ENCODE measurements at regions of chr1 and their contacts with region 1.

Region 1: DNA sequence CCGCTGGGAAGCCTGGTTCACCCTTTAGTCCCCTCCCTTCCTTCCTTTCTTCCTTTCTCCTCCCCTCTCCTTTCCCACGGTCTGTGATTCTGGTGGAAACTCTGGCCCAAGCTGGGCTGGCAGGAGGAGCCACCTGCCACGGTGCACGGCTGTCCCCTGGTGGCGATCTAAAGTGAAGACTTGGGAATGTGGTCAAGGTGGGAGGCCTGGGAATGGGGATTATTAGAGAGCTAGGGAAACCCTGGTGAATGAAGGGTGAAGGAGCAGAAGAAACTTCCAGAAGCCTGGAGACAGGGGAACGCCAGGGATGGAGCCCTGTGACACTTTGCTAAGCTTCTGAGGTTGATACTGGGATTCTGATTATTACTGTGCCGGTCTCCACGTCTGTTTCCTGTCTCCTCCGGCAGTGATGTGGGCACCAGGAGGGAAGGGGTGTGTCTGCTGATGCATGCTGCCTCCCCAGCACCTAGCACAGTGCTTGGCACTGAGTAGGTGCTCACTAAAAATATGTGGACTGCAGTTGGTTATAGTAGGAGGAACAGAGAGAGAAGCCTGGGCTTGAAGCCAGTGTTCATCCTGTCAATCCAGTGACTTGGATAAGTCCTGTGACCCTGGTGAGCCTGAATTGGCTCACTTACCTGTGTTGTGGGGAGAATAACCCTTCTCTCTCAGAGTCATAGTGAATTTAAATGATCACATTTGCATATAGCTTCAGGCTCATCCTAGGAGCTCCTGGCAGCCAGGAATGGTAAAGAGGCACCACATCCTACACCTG is 71.2 kb upstream of the NBPF3 start:
- DNase-seq: peak; percentile 71
- ATAC-seq: peak; percentile 97
- H3K4me3 ChIP-seq: peak overlapping the region in 1 of 2 experiments; percentile 23; a peak in 1 of 4 replicates
- H3K27ac ChIP-seq: no peak overlapping the region
- H3K4me1 ChIP-seq: no peaks in the 10 kb centered on the region
- H3K27me3 ChIP-seq: no peaks in the 10 kb centered on the region
- CTCF ChIP-seq: peak; percentile 100

Region 2: GRCh38 chr1:21232044-21232443 is 136.7 kb before region 1 on chr1:
- CTCF ChIA-PET with region 1: interaction called, 20 read pairs
- POLR2A ChIA-PET with region 1: no interaction called
- in situ Hi-C with region 1: no loop called
- intact Hi-C with region 1: loop called (anchors 1 kb)
- DNase-seq: no peak
- ATAC-seq: peak; percentile 83
- H3K4me3 ChIP-seq: no peak overlapping the region
- H3K27ac ChIP-seq: no peak overlapping the region
- H3K4me1 ChIP-seq: no peaks in the 10 kb centered on the region
- H3K27me3 ChIP-seq: no peaks in the 10 kb centered on the region
- CTCF ChIP-seq: peak; percentile 90

Region 3: GRCh38 chr1:21255278-21255942 is 113.3 kb before region 1 on chr1:
- CTCF ChIA-PET with region 1: interaction called, 33 read pairs
- POLR2A ChIA-PET with region 1: no interaction called
- in situ Hi-C with region 1: no loop called
- intact Hi-C with region 1: loop called (anchors 1 kb)
- DNase-seq: no peak
- ATAC-seq: peak; percentile 95
- H3K4me3 ChIP-seq: no peak overlapping the region
- H3K27ac ChIP-seq: no peak overlapping the region
- H3K4me1 ChIP-seq: peaks cover 19% of the 10 kb centered on the region
- H3K27me3 ChIP-seq: no peaks in the 10 kb centered on the region
- CTCF ChIP-seq: peak; percentile 92

Region 4: DNA sequence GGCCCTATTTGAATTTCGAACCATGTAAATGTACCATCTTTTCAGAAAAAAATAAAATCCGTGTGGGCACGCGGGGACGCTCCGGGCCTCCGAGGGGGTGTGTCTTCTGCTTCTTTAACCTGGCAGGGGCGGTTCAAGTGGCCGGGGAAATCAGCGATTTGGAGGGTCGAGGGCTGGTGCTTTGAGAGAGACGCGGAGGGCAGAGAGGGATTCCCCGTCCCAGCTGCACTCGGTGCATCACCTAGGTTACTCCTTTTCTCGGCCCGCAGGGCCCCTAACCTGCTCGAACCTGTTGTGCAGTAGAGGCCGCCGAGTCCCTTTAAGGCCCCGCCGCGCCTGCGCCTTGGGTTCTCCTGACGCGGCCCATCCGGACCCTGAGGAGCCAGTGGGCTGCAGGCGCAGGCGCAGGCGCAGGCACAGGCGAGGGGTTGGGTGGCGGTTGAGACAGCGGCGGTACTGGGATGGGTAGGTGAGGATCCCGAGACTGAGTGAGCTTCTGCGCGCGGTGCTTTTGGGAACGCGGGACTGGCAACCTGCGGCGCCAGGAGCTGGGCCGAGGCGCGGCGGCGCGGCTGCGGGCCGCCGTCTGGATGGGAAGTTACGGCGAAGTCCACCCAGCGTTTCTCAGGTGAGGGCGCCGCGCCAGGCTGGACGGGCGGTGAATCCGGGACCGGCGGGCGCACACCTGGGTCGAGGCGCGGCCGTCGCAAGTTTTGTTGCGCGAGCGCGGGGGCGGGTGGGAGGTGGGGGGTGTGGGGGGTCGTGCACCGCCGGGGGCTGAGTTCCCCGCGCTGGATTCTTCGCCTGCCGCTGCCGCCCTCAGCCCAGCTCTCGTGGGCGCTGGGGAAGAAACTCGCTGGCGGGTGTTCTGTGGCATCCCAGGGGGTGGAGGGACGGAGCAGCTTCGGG is 71.3 kb after region 1 on chr1 and contains the start of gene NBPF3:
- CTCF ChIA-PET with region 1: interaction called, 11 read pairs
- POLR2A ChIA-PET with region 1: no interaction called
- in situ Hi-C with region 1: no loop called
- intact Hi-C with region 1: no loop called
- DNase-seq: peak; percentile 67
- ATAC-seq: peak; percentile 95
- H3K4me3 ChIP-seq: peak within 1 kb of the TSS; percentile 57 to 74
- H3K27ac ChIP-seq: peak within 1 kb of the TSS; percentile 59
- H3K4me1 ChIP-seq: peaks cover 9% of the 10 kb centered on the region
- H3K27me3 ChIP-seq: no peaks in the 10 kb centered on the region
- CTCF ChIP-seq: no peak
- total RNA-seq, gene NBPF3: 15.9 TPM

Region 5: DNA sequence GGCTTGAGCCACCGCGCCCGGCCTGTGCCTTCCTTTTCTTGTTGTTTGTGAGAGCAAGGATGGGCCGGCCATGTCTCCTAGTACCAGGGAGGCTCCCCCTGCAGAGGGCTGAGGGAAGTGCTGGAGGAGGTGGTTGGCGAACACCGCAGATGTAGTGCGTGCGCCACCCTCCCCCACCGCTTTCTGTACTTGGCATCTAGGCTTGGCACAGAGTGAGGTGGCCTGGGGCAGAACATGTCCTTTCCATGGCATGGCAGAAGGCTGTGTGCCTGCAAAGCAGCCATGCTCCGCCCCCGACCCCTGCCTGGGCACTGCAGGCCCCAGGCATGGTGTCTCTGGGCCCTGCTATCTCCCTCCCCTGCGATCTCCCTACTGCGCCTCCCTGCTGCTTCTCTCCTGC is 171.2 kb after region 1 on chr1:
- CTCF ChIA-PET with region 1: interaction called, 13 read pairs
- POLR2A ChIA-PET with region 1: no interaction called
- in situ Hi-C with region 1: no loop called
- intact Hi-C with region 1: no loop called
- DNase-seq: no peak
- ATAC-seq: peak; percentile 68; the same call in 1 of the 2 replicates
- H3K4me3 ChIP-seq: no peak overlapping the region
- H3K27ac ChIP-seq: no peak overlapping the region
- H3K4me1 ChIP-seq: no peaks in the 10 kb centered on the region
- H3K27me3 ChIP-seq: no peaks in the 10 kb centered on the region
- CTCF ChIP-seq: no peak; the same call in 1 of the 2 replicates

Region 6: DNA sequence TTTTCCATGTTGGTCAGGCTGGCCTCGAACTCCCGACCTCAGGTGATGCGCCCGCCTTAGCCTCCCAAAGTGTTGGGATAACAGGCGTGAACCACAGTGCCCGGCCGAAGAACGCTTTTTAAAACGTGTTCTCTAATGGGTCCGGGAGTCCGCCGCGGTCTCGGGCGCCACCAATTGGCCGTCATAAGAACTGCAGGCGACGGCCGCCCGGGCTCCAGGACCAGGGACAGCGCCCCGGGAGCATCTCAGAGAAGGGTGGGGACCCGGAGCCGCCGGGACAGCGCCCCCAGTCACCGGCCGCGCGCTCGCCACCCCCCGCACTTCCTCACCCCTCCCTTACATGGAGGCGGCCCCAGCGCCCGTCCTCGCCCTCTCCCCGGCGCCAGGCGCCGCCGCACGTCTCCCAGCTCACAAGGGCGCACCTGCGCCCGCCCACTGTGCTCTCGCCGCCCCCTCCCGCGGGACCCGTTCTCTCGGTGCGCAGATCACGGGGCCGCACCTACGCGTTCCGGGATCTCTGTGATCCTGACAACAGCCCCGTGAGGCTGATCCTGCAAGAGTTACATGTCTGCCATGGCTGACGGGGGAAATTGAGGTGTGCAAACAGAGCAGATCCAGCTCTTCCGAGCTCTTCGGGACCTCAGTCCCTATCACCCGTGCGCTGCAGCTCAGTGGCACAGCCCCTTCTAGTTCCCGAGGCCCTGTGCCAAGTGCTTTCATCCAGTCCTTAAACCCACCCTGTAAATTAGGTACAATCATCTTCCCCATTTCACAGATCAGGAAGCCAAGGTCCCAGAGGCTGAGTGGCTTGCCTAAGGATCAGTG is 290.6 kb after region 1 on chr1:
- CTCF ChIA-PET with region 1: interaction called, 5 read pairs
- POLR2A ChIA-PET with region 1: no interaction called
- in situ Hi-C with region 1: no loop called
- intact Hi-C with region 1: loop called (anchors 2 kb)
- DNase-seq: no peak
- ATAC-seq: peak; percentile 45
- H3K4me3 ChIP-seq: peak overlapping the region; percentile 18 to 31; a peak in 2 of 4 replicates
- H3K27ac ChIP-seq: no peak overlapping the region
- H3K4me1 ChIP-seq: 0 out of 2 replicates have a peak, but pooled peaks cover 4% of the 10 kb centered on the region
- H3K27me3 ChIP-seq: peaks cover 2% of the 10 kb centered on the region; the same call in 1 of the 2 replicates
- CTCF ChIP-seq: peak; percentile 99